ENCODE measurements at regions of chr1 and their contacts with region 1.

Region 1: GRCh38 chr1:58919959-58920321 is 136.1 kb upstream of the JUN start:
- DNase-seq: no peak
- ATAC-seq: no peak
- H3K4me3 ChIP-seq: no peak overlapping the region
- H3K27ac ChIP-seq: no peak overlapping the region
- H3K4me1 ChIP-seq: peaks cover 15% of the 10 kb centered on the region
- H3K27me3 ChIP-seq: no peaks in the 10 kb centered on the region
- CTCF ChIP-seq: no peak
- POLR2A ChIP-seq: no peak

Region 2: GRCh38 chr1:58979086-58979485 is 59.1 kb after region 1 on chr1:
- intact Hi-C with region 1: no loop called
- DNase-seq: peak in 1 of 4 donors; percentile 30
- ATAC-seq: no peak
- H3K4me3 ChIP-seq: no peak overlapping the region
- H3K27ac ChIP-seq: no peak overlapping the region
- H3K4me1 ChIP-seq: peaks cover 79% of the 10 kb centered on the region
- H3K27me3 ChIP-seq: no peaks in the 10 kb centered on the region
- CTCF ChIP-seq: no peak
- POLR2A ChIP-seq: no peak

Region 3: DNA sequence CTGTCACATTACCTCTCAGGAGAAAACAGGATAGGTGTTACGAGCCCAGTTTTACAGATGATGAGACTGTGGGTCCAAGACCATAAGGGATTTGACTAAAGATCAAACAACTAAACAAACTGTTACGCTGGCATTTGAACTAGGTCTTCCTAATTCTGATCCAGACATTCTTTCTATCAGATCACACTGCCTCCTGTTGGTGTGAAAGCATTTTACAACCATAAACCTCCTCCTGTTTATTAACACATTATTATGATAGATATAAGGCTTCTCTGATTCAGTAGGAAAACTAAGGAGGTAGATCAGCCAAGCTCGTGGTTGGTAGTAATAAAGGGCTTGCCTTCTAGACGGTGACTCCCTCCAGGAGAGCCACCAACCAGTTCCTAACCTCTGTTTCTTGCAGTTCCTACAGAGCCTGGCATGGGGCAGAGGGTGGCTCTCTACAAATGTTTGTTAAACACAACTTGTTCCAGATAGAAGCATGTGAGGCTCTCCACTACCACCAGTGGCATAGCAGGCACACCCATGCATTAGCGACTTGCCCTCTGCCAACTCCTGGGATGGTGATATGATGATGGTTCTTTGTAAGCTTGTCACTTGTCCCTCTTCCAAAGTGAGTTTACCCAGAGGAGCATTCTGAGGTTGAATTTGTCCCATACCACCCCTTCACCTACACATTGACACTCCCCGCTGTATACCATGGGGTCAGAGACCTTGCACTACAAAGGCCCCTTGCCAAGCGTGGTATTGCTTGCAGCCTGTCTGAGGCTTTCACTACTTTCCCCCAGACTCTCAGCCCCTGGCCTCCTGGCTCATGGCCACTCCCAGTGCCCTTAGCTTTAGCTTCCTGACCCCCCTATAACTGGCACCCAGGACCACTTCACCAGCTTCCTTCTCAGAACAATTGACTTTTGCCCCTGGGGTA is 798.4 kb after region 1 on chr1:
- intact Hi-C with region 1: loop called (anchors 10 kb)
- DNase-seq: no peak
- ATAC-seq: no peak
- H3K4me3 ChIP-seq: no peak overlapping the region
- H3K27ac ChIP-seq: no peak overlapping the region
- H3K4me1 ChIP-seq: no peaks in the 10 kb centered on the region
- H3K27me3 ChIP-seq: no peaks in the 10 kb centered on the region
- CTCF ChIP-seq: peak in 5 of 7 experiments; percentile 32 to 44 (median 35)
- POLR2A ChIP-seq: no peak